BJ (cell line): ENCODE measurements at regions of chr2 and their contacts with region 1.

Region 1: GRCh38 chr2:241844066-241844728 is 14.5 kb downstream of the PDCD1 start:
- DNase-seq: peak; percentile 4
- H3K4me3 ChIP-seq: peak overlapping the region; percentile 26
- H3K27me3 ChIP-seq: 0 out of 2 replicates have a peak, but pooled peaks cover 2% of the 10 kb centered on the region
- CTCF ChIP-seq: no peak

Region 2: GRCh38 chr2:241854342-241855244 is 10.4 kb after region 1 on chr2:
- CTCF ChIA-PET with region 1: interaction called, 4 read pairs
- POLR2A ChIA-PET with region 1: interaction called, 15 read pairs
- DNase-seq: no peak
- H3K4me3 ChIP-seq: no peak overlapping the region
- H3K27me3 ChIP-seq: no peaks in the 10 kb centered on the region
- CTCF ChIP-seq: no peak

Region 3: GRCh38 chr2:241999184-241999583 is 155.0 kb after region 1 on chr2:
- CTCF ChIA-PET with region 1: no interaction called
- POLR2A ChIA-PET with region 1: no interaction called
- DNase-seq: no peak
- H3K4me3 ChIP-seq: no peak overlapping the region
- H3K27me3 ChIP-seq: no peaks in the 10 kb centered on the region
- CTCF ChIP-seq: no peak